Common myeloid progenitor, CD34-positive (primary cell): ENCODE measurements at regions of chr5 and their contacts with region 1.

Region 1: GRCh38 chr5:160390787-160391696 is 8.8 kb downstream of the FAM200C start:
- DNase-seq: peak; percentile 36 to 63 (median 59)
- H3K4me3 ChIP-seq: no peak overlapping the region
- H3K27ac ChIP-seq: no peak overlapping the region
- H3K4me1 ChIP-seq: no peaks in the 10 kb centered on the region
- H3K27me3 ChIP-seq: no peaks in the 10 kb centered on the region

Region 2: GRCh38 chr5:160021831-160022446 is 369.1 kb before region 1 on chr5:
- CTCF ChIA-PET with region 1: interaction called, 13 read pairs
- POLR2A ChIA-PET with region 1: no interaction called
- DNase-seq: peak; percentile 65 to 81 (median 70)
- H3K4me3 ChIP-seq: no peak overlapping the region
- H3K27ac ChIP-seq: no peak overlapping the region
- H3K4me1 ChIP-seq: no peaks in the 10 kb centered on the region
- H3K27me3 ChIP-seq: no peaks in the 10 kb centered on the region

Region 3: GRCh38 chr5:160199410-160199911 is 191.6 kb before region 1 on chr5:
- CTCF ChIA-PET with region 1: interaction called, 13 read pairs
- POLR2A ChIA-PET with region 1: no interaction called
- DNase-seq: peak; percentile 46 to 71 (median 71)
- H3K4me3 ChIP-seq: peak overlapping the region in 6 of 7 experiments; percentile 14 to 83 (median 67)
- H3K27ac ChIP-seq: no peak overlapping the region
- H3K4me1 ChIP-seq: peaks cover 0 to 26% (median 24%) of the 10 kb centered on the region in 4 experiments
- H3K27me3 ChIP-seq: no peaks in the 10 kb centered on the region

Region 4: GRCh38 chr5:160367261-160367660 is 23.8 kb before region 1 on chr5:
- CTCF ChIA-PET with region 1: interaction called, 12 read pairs
- POLR2A ChIA-PET with region 1: interaction called, 3 read pairs
- DNase-seq: no peak
- H3K4me3 ChIP-seq: no peak overlapping the region
- H3K27ac ChIP-seq: no peak overlapping the region
- H3K4me1 ChIP-seq: peaks cover 4 to 12% (median 9%) of the 10 kb centered on the region in 4 experiments
- H3K27me3 ChIP-seq: peaks cover 0 to 28% (median 18%) of the 10 kb centered on the region in 5 experiments

Region 5: DNA sequence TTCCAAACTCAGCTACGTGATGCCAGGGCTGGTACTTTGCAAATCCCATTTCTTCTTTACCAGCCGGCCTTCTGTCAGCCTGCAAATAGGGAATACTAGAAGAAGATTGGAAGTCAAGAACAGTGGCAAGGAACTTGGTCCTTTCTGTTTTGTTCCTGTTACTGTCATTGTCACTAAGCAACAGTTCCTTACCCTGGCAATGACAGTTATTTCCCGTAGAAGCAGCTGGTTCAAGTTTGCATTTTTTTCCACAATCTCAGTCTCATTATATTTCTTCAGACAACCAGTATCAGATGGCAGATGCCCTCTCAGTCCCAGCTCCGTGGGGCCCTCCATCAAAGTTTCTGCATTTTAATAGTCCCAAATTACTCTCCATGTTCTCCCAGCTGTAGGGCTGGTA is 11.5 kb before region 1 on chr5:
- CTCF ChIA-PET with region 1: interaction called, 35 read pairs
- POLR2A ChIA-PET with region 1: no interaction called
- DNase-seq: peak; percentile 37 to 81 (median 70)
- H3K4me3 ChIP-seq: peak overlapping the region in 1 of 7 experiments; percentile 31
- H3K27ac ChIP-seq: peak overlapping the region in 1 of 2 experiments; percentile 57
- H3K4me1 ChIP-seq: peaks cover 0 to 14% (median 5%) of the 10 kb centered on the region in 4 experiments
- H3K27me3 ChIP-seq: peaks cover 0 to 8% (median 4%) of the 10 kb centered on the region in 5 experiments

Region 6: DNA sequence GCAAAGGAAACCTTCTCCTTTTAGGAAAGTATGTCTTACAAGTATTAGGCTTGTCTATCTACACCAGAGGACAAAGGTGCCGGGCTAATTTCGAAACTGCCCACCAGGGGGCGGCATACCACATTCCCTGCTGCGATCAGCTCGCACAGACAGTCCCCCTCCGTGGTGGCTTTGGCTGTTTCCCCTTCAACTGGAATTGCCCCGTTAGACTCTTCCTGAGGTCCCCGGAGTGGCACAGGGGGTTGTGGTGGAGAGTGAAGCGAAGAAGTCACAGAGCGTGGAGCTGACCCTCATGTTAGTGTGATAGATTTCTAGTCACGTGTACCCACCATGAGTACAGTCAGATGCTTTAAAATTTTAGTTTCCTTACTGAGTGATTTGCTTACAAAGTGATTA is 48.2 kb after region 1 on chr5:
- CTCF ChIA-PET with region 1: no interaction called
- POLR2A ChIA-PET with region 1: no interaction called
- DNase-seq: peak; percentile 86 to 90 (median 87)
- H3K4me3 ChIP-seq: peak overlapping the region; percentile 5 to 94 (median 71)
- H3K27ac ChIP-seq: peak overlapping the region; percentile 18 to 55
- H3K4me1 ChIP-seq: peaks cover 10 to 34% (median 31%) of the 10 kb centered on the region in 4 experiments
- H3K27me3 ChIP-seq: no peaks in the 10 kb centered on the region